ENCODE measurements at regions of chr14 and their contacts with region 1.

Region 1: DNA sequence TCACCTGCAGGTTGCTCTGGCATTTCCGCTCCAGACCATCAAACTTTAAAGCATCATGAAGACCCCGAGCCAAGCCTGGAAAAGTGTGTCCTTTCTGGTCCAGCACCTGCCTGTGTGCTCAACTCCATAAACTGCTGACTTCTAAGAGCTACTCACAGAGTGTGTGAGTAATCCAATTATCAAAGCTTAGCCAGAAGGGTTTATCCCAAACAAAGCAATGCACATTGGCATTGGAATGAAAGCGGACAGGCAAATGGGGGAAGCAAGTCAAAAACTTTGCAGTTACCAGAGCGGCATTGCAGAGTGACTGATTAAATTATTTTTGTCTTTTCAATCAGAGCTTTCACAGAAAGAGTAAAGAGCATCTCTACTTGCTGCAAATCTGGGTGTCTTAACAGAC is 1262.4 kb upstream of the SEL1L start:
- DNase-seq: no peak
- H3K4me3 ChIP-seq: no peak overlapping the region
- H3K27ac ChIP-seq: no peak overlapping the region
- H3K4me1 ChIP-seq: no peaks in the 10 kb centered on the region
- CTCF ChIP-seq: no peak

Region 2: GRCh38 chr14:81582420-81582819 is 1213.7 kb before region 1 on chr14:
- CTCF ChIA-PET with region 1: no interaction called
- POLR2A ChIA-PET with region 1: no interaction called
- intact Hi-C with region 1: no loop called
- DNase-seq: no peak
- H3K4me3 ChIP-seq: no peak overlapping the region
- H3K27ac ChIP-seq: no peak overlapping the region
- H3K4me1 ChIP-seq: no peaks in the 10 kb centered on the region
- CTCF ChIP-seq: no peak

Region 3: DNA sequence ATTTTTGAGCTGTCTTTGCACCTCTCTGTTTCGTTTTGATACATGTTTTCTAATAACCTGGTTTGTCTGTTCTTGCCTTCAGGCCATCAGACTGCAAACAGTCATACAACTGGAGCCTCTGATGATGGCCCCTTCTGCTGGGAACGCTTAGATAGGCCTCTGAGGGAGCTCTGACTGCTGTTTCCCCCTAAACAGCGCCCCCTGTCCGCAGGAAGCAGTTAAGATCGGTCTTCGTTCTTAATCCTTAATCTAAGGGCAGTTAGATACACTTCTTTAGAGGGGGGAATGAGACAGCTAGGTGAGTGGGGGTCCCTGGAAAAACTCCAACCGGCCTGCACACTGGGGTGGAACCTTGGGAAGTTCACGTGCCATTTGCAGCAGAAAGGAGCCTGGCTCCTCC is 76.4 kb after region 1 on chr14:
- CTCF ChIA-PET with region 1: no interaction called
- POLR2A ChIA-PET with region 1: no interaction called
- intact Hi-C with region 1: loop called (anchors 5 kb)
- DNase-seq: peak; percentile 3
- H3K4me3 ChIP-seq: no peak overlapping the region
- H3K27ac ChIP-seq: no peak overlapping the region
- H3K4me1 ChIP-seq: no peaks in the 10 kb centered on the region
- CTCF ChIP-seq: peak; percentile 70